ENCODE measurements at regions of chr4 and their contacts with region 1.

Region 1: DNA sequence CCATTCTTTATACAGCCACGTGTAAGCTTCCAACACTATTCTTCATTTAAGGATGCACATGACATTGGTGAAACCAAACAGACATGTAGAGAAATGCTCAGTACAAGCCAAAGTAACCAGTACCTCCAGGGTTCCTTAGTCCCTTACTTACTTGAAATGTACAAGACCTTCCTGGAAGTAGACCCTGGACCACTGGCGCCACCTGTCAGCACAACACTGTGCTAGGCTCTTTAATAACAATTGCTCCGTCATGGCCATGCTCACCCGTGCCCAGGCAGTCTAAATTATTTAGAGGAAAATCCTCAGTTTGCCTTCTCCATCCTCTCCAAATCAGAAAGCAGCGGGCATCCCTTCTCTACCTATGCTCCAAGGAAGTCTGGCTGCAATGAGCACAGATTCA is 52.7 kb downstream of the ADGRA3 start:
- DNase-seq: no peak

Region 2: GRCh38 chr4:22323691-22324090 is 139.5 kb before region 1 on chr4:
- intact Hi-C with region 1: no loop called
- DNase-seq: no peak

Region 3: DNA sequence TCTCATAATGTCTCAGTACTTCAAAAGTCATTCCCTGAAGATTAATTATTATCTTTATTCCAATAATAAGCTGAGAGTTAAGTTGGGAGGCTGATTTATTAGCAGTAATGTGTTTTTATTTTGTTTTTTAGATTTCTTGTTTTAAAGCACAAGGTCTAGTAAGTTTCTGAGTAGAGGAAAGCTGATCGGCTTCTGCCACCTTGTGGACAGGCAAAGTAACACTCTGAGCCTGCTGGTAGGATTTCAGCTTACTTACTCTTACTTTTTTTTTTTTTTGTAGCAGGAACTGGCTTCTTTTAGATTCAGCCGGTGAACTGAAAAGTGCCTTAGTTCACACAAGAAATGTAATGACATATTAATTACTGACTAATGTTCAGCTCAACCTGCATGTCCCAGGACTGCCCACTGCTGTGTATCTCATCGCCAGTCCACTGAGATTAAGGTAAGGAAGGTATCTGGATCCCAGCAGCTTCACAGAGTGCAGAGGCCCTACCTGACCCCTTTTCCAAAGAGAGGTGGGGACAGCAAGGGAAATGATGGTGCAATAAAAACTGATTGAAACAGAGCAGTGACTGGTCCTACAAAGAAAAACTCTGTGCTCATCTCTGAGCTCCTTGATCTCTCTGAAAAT is 73.8 kb before region 1 on chr4:
- intact Hi-C with region 1: loop called in 1 of 2 experiments (anchors 2 kb)
- DNase-seq: no peak

Region 4: DNA sequence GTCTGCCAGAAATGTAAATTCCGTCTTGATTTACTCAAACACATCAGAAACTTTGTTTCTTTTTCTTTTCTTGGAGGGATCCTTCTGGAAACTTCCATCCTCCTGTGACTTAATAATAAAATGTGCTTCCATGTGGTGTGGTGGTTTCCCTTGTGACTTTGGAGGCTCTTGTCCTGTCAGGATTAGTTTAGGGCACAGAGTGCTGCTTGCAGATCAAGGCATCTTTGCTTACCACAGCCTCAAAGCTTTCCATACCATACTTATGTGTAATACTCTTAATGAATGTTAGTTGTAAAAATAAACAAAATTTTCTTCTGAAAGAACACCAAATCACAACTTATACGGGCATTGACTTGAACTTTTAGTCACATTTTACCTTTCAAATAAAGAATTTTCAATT is 256.9 kb after region 1 on chr4:
- intact Hi-C with region 1: no loop called
- DNase-seq: no peak